BJ (cell line): ENCODE measurements at regions of chr2 and their contacts with region 1.

Region 1: GRCh38 chr2:25228848-25229278 is 60.5 kb upstream of the POMC start:
- DNase-seq: no peak
- H3K4me3 ChIP-seq: no peak overlapping the region
- H3K27me3 ChIP-seq: 0 out of 2 replicates have a peak, but pooled peaks cover 1% of the 10 kb centered on the region
- CTCF ChIP-seq: peak; percentile 88

Region 2: DNA sequence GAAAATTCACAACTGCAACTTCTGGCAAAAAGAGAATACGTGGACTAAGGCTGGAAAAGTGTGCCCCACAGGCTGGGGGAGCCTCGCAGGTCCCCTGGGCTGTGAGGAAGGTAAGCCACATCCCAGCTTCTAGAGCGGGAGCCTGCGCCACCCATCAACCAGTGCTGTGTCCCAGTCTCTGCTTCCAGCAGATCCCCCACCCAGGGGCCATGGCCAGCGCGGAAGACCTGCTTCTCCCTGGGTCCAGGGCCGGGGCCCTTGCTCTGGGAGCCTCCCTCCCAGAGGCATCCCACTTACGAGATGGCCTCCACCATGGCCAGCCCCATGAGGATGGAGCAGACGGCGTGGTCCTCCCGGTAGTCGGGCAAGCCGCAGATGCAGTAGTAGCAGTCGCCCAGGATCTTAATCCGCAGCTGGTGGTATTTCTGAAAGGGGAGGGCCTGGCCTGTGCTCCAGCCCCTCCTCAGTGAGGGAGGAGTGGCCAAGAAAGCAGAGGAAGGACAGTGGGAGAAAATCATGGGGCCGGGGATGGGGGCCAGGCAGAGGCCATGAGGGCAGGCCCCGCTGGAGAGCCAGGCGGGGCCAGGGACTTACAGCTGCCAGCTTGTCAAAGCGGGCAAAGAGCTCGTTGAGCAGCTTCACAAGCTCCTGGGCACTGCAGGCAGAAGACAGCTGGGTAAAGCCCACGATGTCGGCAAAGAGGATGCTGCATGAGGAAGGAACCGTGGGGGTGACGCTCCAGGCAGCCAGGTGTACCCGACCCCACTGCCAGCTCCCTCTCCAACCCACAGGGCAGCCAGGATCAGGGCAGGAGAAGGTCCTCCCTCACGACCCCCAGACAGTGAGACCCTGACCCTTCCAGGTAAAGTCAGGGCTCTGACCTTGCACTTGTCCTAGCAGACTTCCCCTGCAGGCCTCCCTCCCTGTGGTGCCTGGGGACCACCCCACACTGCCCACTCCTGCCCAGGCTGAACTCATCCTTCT is 387.6 kb before region 1 on chr2:
- CTCF ChIA-PET with region 1: no interaction called
- POLR2A ChIA-PET with region 1: no interaction called
- DNase-seq: no peak
- H3K4me3 ChIP-seq: no peak overlapping the region
- H3K27me3 ChIP-seq: no peaks in the 10 kb centered on the region
- CTCF ChIP-seq: no peak

Region 3: DNA sequence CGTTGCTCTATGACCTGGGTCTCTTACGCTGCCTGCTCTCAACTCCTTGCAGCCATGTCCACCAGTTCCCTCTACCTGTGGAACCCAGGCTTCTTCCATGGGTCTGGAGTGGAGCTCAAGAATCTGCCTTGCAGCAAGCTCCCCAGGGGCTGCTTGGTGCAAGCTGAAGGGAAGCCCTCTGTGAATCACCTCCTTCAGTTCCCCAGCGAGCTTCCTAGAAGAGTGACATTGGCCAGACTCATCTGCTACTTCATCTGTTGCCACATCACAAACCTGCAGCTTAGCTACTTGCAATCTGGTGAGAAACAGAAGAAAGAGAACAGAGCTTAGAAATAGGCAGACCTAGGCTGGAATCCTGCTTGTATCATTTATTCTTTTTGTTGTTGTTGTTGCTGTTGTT is 196.8 kb before region 1 on chr2:
- CTCF ChIA-PET with region 1: no interaction called
- POLR2A ChIA-PET with region 1: no interaction called
- DNase-seq: no peak
- H3K4me3 ChIP-seq: no peak overlapping the region
- H3K27me3 ChIP-seq: peaks cover 5% of the 10 kb centered on the region
- CTCF ChIP-seq: no peak

Region 4: GRCh38 chr2:25207078-25207545 is 21.8 kb before region 1 on chr2:
- CTCF ChIA-PET with region 1: interaction called, 16 read pairs
- POLR2A ChIA-PET with region 1: no interaction called
- DNase-seq: no peak
- H3K4me3 ChIP-seq: no peak overlapping the region
- H3K27me3 ChIP-seq: no peaks in the 10 kb centered on the region
- CTCF ChIP-seq: no peak

Region 5: GRCh38 chr2:25215948-25216679 is 12.7 kb before region 1 on chr2:
- CTCF ChIA-PET with region 1: interaction called, 14 read pairs
- POLR2A ChIA-PET with region 1: no interaction called
- DNase-seq: no peak
- H3K4me3 ChIP-seq: peak overlapping the region; percentile 48
- H3K27me3 ChIP-seq: no peaks in the 10 kb centered on the region
- CTCF ChIP-seq: no peak

Region 6: DNA sequence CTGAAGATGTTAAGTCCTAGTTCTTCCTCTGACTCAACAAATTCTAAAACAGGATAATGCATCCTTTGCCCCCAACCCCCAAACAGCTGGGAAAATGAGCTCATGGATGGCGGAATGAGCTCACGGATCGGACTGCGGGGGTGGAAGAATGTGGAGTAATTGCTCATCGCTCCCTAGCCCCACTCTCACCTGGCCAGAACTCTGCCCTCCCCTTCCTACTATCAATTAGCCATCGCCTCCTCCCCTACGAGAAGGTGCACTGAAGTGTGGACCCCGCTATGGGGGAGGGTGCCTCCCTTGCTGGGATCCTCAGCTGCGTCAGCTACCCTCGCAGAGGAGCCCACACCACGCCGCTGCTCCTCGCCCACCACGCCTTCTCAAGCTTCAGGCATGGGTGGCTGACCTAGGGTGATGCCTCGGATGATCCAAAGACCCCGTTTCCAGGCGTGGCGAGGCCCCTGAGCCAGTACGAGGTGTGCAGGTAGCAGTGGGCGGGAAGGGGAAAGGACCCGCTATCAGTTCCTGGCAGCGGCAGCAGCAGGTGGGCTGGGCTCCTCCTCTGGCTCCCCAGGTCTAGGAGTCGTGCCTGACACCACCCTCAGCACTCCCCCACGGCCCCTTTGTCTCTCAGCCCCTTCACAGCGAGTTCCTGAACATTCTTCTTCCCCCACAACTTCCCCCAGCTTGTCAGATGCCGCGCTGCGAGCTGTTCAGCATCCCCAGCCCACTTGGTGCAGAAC is 21.6 kb after region 1 on chr2:
- CTCF ChIA-PET with region 1: interaction called, 12 read pairs
- POLR2A ChIA-PET with region 1: no interaction called
- DNase-seq: peak; percentile 28
- H3K4me3 ChIP-seq: no peak overlapping the region
- H3K27me3 ChIP-seq: no peaks in the 10 kb centered on the region
- CTCF ChIP-seq: no peak